CD8-positive, alpha-beta T cell (primary cell): ENCODE measurements at regions of chr1 and their contacts with region 1.

Region 1: DNA sequence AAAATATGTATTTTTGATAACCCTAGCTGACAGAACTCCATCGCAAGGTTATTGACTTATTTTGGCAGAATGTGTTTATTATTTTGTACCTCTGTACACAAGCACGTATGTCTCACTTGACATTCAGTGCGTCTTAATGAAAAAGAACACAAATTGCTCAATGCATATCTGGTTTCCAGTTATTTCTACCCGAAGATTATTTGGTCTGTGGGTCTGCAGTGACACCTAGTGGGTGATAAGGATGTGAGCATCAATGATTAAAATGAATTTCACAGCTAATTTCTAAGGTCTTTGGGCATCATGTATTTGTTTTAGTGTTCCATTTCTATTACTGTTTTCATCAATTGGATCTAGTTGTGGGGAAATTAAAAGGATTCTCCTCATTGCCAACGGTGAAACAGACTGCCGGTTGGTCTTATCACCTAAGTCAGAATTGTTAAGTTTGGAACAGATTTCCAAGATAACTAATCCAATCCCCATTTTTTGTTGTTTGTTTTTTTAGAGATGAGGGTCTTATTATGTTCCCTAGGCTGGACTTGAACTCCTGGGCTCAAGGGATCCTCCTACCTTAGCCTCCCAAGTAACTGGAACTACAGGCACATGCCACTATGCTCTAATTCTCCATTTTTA is 13.9 kb downstream of the DDX20 start:
- DNase-seq: peak; percentile 7 to 82 (median 57)
- ATAC-seq: peak; percentile 72
- H3K4me3 ChIP-seq: no peak overlapping the region
- H3K4me3 Mint-ChIP-seq: no peak overlapping the region
- H3K27ac ChIP-seq: no peak overlapping the region
- H3K27ac Mint-ChIP-seq: no peak overlapping the region
- H3K4me1 ChIP-seq: no peaks in the 10 kb centered on the region
- H3K4me1 Mint-ChIP-seq: peaks cover 7% of the 10 kb centered on the region
- H3K27me3 ChIP-seq: no peaks in the 10 kb centered on the region
- H3K27me3 Mint-ChIP-seq: no peaks in the 10 kb centered on the region
- CTCF ChIP-seq: peak; percentile 94

Region 2: DNA sequence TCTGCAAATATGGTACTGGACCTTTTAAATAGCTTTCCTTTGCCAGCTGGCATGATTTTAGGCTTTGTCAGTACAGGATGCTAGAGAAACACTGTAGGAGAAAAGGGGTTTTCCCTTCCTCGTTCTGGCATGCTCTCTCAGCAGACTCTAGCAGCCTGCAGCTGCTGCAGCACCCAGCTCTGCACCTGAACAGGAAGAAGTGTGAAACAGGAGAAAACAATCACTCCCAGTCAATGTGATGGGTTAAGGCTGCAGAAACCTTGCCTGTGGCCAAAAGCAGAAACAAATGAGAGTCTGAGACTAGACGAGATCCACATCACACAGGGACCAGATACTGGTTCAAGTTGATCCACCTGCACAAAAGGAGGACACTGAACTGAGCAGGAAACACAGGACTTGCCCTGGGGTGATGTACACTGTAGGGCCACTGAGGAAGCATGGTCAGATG is 363.3 kb before region 1 on chr1:
- CTCF ChIA-PET with region 1: no interaction called
- POLR2A ChIA-PET with region 1: no interaction called
- intact Hi-C with region 1: loop called in 1 of 2 experiments (anchors 2 kb)
- DNase-seq: peak in 8 of 9 experiments; percentile 32 to 78 (median 50)
- ATAC-seq: peak; percentile 99
- H3K4me3 ChIP-seq: no peak overlapping the region
- H3K4me3 Mint-ChIP-seq: peak overlapping the region; percentile 45
- H3K27ac ChIP-seq: no peak overlapping the region
- H3K27ac Mint-ChIP-seq: peak overlapping the region; percentile 79
- H3K4me1 ChIP-seq: peaks cover 17% of the 10 kb centered on the region
- H3K4me1 Mint-ChIP-seq: peaks cover 29% of the 10 kb centered on the region
- H3K27me3 ChIP-seq: no peaks in the 10 kb centered on the region
- H3K27me3 Mint-ChIP-seq: no peaks in the 10 kb centered on the region
- CTCF ChIP-seq: no peak

Region 3: GRCh38 chr1:111559736-111560279 is 209.8 kb before region 1 on chr1:
- CTCF ChIA-PET with region 1: no interaction called
- POLR2A ChIA-PET with region 1: no interaction called
- intact Hi-C with region 1: loop called in 1 of 2 experiments (anchors 5 kb)
- DNase-seq: no peak
- ATAC-seq: no peak
- H3K4me3 ChIP-seq: no peak overlapping the region
- H3K4me3 Mint-ChIP-seq: no peak overlapping the region
- H3K27ac ChIP-seq: no peak overlapping the region
- H3K27ac Mint-ChIP-seq: no peak overlapping the region
- H3K4me1 ChIP-seq: no peaks in the 10 kb centered on the region
- H3K4me1 Mint-ChIP-seq: peaks cover 6% of the 10 kb centered on the region
- H3K27me3 ChIP-seq: no peaks in the 10 kb centered on the region
- H3K27me3 Mint-ChIP-seq: no peaks in the 10 kb centered on the region
- CTCF ChIP-seq: no peak

Region 4: GRCh38 chr1:111654839-111655238 is 114.8 kb before region 1 on chr1:
- CTCF ChIA-PET with region 1: no interaction called
- POLR2A ChIA-PET with region 1: no interaction called
- intact Hi-C with region 1: no loop called
- DNase-seq: no peak
- ATAC-seq: no peak
- H3K4me3 ChIP-seq: no peak overlapping the region
- H3K4me3 Mint-ChIP-seq: no peak overlapping the region
- H3K27ac ChIP-seq: no peak overlapping the region
- H3K27ac Mint-ChIP-seq: peak overlapping the region; percentile 84
- H3K4me1 ChIP-seq: peaks cover 59% of the 10 kb centered on the region
- H3K4me1 Mint-ChIP-seq: peaks cover 65% of the 10 kb centered on the region
- H3K27me3 ChIP-seq: no peaks in the 10 kb centered on the region
- H3K27me3 Mint-ChIP-seq: no peaks in the 10 kb centered on the region
- CTCF ChIP-seq: no peak

Region 5: DNA sequence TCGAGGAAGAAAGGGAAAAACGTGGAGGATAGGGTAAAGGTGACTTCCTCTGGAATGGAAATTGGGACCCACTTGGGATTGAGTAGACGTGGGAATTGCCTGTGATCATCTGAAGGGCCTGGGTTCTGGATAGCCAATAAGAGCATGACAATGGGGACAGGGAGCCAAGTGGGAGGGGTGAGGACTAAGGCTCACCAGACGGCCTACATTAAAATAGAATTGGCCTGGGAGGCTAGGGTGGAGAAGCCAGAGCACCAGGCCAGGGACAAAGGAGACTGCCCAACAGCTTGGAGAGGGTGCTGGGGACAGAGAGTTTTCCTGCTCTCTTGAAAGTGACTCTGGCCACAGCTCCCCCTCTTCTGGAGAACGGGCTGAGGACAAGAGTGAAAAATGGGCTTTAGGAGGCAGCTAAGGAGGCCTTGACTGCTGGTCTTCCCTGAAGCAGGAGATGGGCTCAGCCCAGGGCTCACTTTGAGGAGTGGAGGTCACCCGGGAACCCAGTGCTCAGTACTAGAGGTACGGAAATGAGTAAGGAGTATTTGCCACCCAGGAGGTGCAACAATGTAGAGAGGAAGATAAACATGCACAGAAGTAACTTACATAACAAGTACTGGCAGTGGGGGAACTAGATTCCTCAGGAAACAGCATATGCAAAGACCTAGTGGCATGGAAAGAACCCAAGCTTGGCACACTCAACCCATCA is 49.2 kb before region 1 on chr1:
- CTCF ChIA-PET with region 1: interaction called, 71 read pairs
- POLR2A ChIA-PET with region 1: interaction called, 8 read pairs
- intact Hi-C with region 1: loop called (anchors 1 kb)
- DNase-seq: no peak
- ATAC-seq: no peak
- H3K4me3 ChIP-seq: no peak overlapping the region
- H3K4me3 Mint-ChIP-seq: no peak overlapping the region
- H3K27ac ChIP-seq: no peak overlapping the region
- H3K27ac Mint-ChIP-seq: no peak overlapping the region
- H3K4me1 ChIP-seq: no peaks in the 10 kb centered on the region
- H3K4me1 Mint-ChIP-seq: peaks cover 15% of the 10 kb centered on the region
- H3K27me3 ChIP-seq: no peaks in the 10 kb centered on the region
- H3K27me3 Mint-ChIP-seq: no peaks in the 10 kb centered on the region
- CTCF ChIP-seq: no peak

Region 6: GRCh38 chr1:112317140-112317539 is 547.5 kb after region 1 on chr1:
- CTCF ChIA-PET with region 1: no interaction called
- POLR2A ChIA-PET with region 1: no interaction called
- intact Hi-C with region 1: no loop called
- DNase-seq: no peak
- ATAC-seq: no peak
- H3K4me3 ChIP-seq: no peak overlapping the region
- H3K4me3 Mint-ChIP-seq: no peak overlapping the region
- H3K27ac ChIP-seq: no peak overlapping the region
- H3K27ac Mint-ChIP-seq: no peak overlapping the region
- H3K4me1 ChIP-seq: no peaks in the 10 kb centered on the region
- H3K4me1 Mint-ChIP-seq: peaks cover 2% of the 10 kb centered on the region
- H3K27me3 ChIP-seq: peaks cover 0 to 3% of the 10 kb centered on the region in 2 experiments
- H3K27me3 Mint-ChIP-seq: peaks cover 19% of the 10 kb centered on the region
- CTCF ChIP-seq: no peak

Region 7: GRCh38 chr1:112614460-112615065 is 844.9 kb after region 1 on chr1:
- CTCF ChIA-PET with region 1: no interaction called
- POLR2A ChIA-PET with region 1: interaction called, 3 read pairs
- intact Hi-C with region 1: loop called in 1 of 2 experiments (anchors 5 kb)
- DNase-seq: peak in 2 of 9 experiments; percentile 46 to 58
- ATAC-seq: no peak
- H3K4me3 ChIP-seq: no peak overlapping the region
- H3K4me3 Mint-ChIP-seq: no peak overlapping the region
- H3K27ac ChIP-seq: no peak overlapping the region
- H3K27ac Mint-ChIP-seq: no peak overlapping the region
- H3K4me1 ChIP-seq: peaks cover 8% of the 10 kb centered on the region
- H3K4me1 Mint-ChIP-seq: peaks cover 12% of the 10 kb centered on the region
- H3K27me3 ChIP-seq: no peaks in the 10 kb centered on the region
- H3K27me3 Mint-ChIP-seq: no peaks in the 10 kb centered on the region
- CTCF ChIP-seq: peak; percentile 60